Naive thymus-derived CD8-positive, alpha-beta T cell (primary cell): ENCODE measurements at regions of chr20 and their contacts with region 1.

Region 1: GRCh38 chr20:18466894-18467730 is at the starts of genes DZANK1 and POLR3F:
- DNase-seq: peak; percentile 85 to 96 (median 90)
- ATAC-seq: peak; percentile 92 to 96
- H3K4me3 Mint-ChIP-seq: peak within 1 kb of the TSS; percentile 90 to 100 (median 97)
- H3K27ac Mint-ChIP-seq: peak within 1 kb of the TSS; percentile 95 to 99 (median 97)
- H3K4me1 Mint-ChIP-seq: peaks cover 8 to 34% (median 28%) of the 10 kb centered on the region in 4 donors
- H3K27me3 Mint-ChIP-seq: no peaks in the 10 kb centered on the region
- polyA plus RNA-seq, gene DZANK1: 0.74 to 1.3 (median 0.87) TPM
- polyA plus RNA-seq, gene POLR3F: 5.2 to 9.3 (median 7.6) TPM

Region 2: GRCh38 chr20:18496740-18497592 is 29.9 kb after region 1 on chr20 and contains the start of gene RBBP9:
- POLR2A ChIA-PET with region 1: interaction called, 35 read pairs
- DNase-seq: peak; percentile 54 to 86 (median 69)
- ATAC-seq: peak; percentile 98 to 99
- H3K4me3 Mint-ChIP-seq: peak within 1 kb of the TSS; percentile 95 to 99 (median 97)
- H3K27ac Mint-ChIP-seq: peak within 1 kb of the TSS; percentile 61 to 98 (median 95)
- H3K4me1 Mint-ChIP-seq: peaks cover 11 to 19% (median 14%) of the 10 kb centered on the region in 4 donors
- H3K27me3 Mint-ChIP-seq: peaks cover 2 to 6% (median 3%) of the 10 kb centered on the region in 5 donors
- polyA plus RNA-seq, gene RBBP9: 7.6 to 9.9 (median 8.8) TPM

Region 3: GRCh38 chr20:18645851-18646250 is 178.7 kb after region 1 on chr20:
- POLR2A ChIA-PET with region 1: no interaction called
- DNase-seq: no peak
- ATAC-seq: no peak
- H3K4me3 Mint-ChIP-seq: no peak overlapping the region
- H3K27ac Mint-ChIP-seq: no peak overlapping the region
- H3K4me1 Mint-ChIP-seq: peaks cover 1 to 11% (median 7%) of the 10 kb centered on the region in 4 donors
- H3K27me3 Mint-ChIP-seq: no peaks in the 10 kb centered on the region